Activated B cell treated with CpG ODN at 0.5 μM for 24 hours (primary cell): ENCODE measurements at regions of chr12 and their contacts with region 1.

Region 1: GRCh38 chr12:89352492-89353187 is at the start of gene DUSP6:
- DNase-seq: peak; percentile 62
- ATAC-seq: peak; percentile 61
- H3K4me3 Mint-ChIP-seq: peak within 1 kb of the TSS; percentile 84
- H3K27ac Mint-ChIP-seq: peak within 1 kb of the TSS; percentile 82
- H3K4me1 Mint-ChIP-seq: peaks cover 62% of the 10 kb centered on the region
- H3K27me3 Mint-ChIP-seq: no peaks in the 10 kb centered on the region
- CTCF ChIP-seq: no peak
- total RNA-seq, gene DUSP6: 1.6 and 1.8 TPM in 2 replicates

Region 2: DNA sequence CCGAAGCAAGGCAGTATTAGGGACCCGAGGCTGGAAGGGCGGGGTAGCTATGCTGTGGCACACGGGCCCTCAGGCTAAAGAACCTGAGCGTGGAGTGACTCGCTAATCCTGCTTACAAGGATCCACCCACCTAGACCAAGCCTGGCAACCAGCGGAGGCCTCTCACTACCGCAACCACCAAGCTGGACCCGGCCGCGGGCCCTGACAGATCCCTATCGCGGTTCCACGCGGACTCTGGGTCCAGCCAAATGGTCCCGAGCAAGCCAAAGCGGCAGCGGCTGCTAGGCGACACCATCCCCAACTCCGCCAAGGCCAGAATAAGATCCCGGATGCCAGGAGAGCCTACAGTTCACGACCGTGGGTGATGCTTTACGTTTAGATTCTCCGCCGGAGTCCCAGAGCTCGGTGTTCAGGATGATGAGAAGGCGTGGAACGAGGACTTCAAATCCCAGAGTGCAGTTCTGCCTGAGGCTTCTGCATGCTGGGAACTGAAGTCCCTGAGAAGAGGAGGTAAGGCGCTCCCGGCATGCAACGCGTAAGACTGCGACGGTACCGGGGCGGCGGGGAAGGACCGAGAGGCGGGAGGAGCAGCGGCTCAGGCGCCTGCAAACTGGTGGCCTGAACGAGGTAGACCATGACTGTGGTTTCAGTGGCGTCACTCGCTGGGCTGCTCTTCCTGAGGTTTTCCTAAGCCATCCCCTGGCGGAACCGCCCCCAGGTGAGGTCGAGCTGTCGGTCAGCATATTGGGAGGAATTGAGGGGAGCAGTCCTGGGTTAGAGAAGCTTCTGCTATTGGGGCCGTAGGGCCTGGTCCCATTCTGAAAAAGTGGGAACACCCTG is 1210.7 kb before region 1 on chr12 and contains the starts of genes CEP290 and TMTC3:
- CTCF ChIA-PET with region 1: no interaction called
- POLR2A ChIA-PET with region 1: no interaction called
- intact Hi-C with region 1: loop called (anchors 5 kb)
- DNase-seq: peak; percentile 81
- ATAC-seq: peak; percentile 94
- H3K4me3 Mint-ChIP-seq: peak within 1 kb of the TSS; percentile 98
- H3K27ac Mint-ChIP-seq: peak within 1 kb of the TSS; percentile 96
- H3K4me1 Mint-ChIP-seq: peaks cover 30% of the 10 kb centered on the region
- H3K27me3 Mint-ChIP-seq: no peaks in the 10 kb centered on the region
- CTCF ChIP-seq: no peak
- total RNA-seq, gene CEP290: 13.7 and 15.0 TPM in 2 replicates
- total RNA-seq, gene TMTC3: 6.3 and 7.4 TPM in 2 replicates

Region 3: DNA sequence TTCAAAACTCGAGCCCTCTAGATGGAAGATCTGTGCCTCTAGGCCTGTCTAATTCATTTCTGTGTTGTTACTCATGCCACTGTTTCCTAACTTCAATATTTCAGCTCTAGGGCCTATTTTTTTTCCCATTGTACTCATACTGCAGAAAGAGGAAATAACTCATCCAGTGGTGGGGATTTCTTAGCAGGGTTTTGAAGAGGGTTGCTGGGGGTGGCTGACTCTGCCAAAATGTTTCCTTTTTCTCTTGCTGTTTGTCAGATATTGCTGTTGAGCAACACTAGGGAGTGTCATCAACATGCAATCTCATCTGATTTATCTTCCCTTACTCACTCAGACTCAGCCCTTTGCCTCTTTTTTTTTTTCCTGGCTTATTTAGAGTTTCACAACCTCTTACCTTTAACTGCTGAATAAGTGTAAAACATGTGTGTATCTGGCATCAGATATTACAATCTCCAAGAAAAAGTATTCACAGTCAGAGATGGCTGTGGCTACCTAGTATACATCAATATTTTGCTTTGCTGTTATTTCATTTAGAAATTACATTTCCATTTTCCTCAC is 189.9 kb before region 1 on chr12:
- CTCF ChIA-PET with region 1: no interaction called
- POLR2A ChIA-PET with region 1: interaction called, 3 read pairs
- intact Hi-C with region 1: loop called (anchors 1 kb)
- DNase-seq: no peak
- ATAC-seq: peak; percentile 56
- H3K4me3 Mint-ChIP-seq: no peak overlapping the region
- H3K27ac Mint-ChIP-seq: no peak overlapping the region
- H3K4me1 Mint-ChIP-seq: peaks cover 28% of the 10 kb centered on the region
- H3K27me3 Mint-ChIP-seq: no peaks in the 10 kb centered on the region
- CTCF ChIP-seq: no peak